K562 (cell line): ENCODE measurements at regions of chr3 and their contacts with region 1.

Region 1: GRCh38 chr3:120095226-120095978 is 1.2 kb upstream of the GSK3B start:
- DNase-seq: peak; percentile 54 to 88 (median 60)
- ATAC-seq: peak; percentile 76
- H3K4me3 ChIP-seq: peak overlapping the region; percentile 92
- H3K27ac ChIP-seq: peak overlapping the region; percentile 99
- H3K4me1 ChIP-seq: peaks cover 6 to 10% of the 10 kb centered on the region in 2 experiments; a peak in 3 of 5 replicates
- H3K27me3 ChIP-seq: no peaks in the 10 kb centered on the region
- CTCF ChIP-seq: no peak
- EP300 ChIP-seq: peak; percentile 20; the same call in 1 of the 2 replicates
- POLR2A ChIP-seq: peak; percentile 97
- RAD21 ChIP-seq: no peak

Region 2: GRCh38 chr3:119279101-119279554 is 816.3 kb before region 1 on chr3:
- CTCF ChIA-PET with region 1: no interaction called
- POLR2A ChIA-PET with region 1: no interaction called
- in situ Hi-C with region 1: no loop called
- intact Hi-C with region 1: no loop called
- DNase-seq: no peak
- ATAC-seq: no peak
- H3K4me3 ChIP-seq: no peak overlapping the region
- H3K27ac ChIP-seq: no peak overlapping the region
- H3K4me1 ChIP-seq: no peaks in the 10 kb centered on the region
- H3K27me3 ChIP-seq: peaks cover 0 to 5% of the 10 kb centered on the region in 2 experiments; a peak in 3 of 5 replicates
- CTCF ChIP-seq: no peak
- EP300 ChIP-seq: no peak
- POLR2A ChIP-seq: no peak
- RAD21 ChIP-seq: no peak

Region 3: DNA sequence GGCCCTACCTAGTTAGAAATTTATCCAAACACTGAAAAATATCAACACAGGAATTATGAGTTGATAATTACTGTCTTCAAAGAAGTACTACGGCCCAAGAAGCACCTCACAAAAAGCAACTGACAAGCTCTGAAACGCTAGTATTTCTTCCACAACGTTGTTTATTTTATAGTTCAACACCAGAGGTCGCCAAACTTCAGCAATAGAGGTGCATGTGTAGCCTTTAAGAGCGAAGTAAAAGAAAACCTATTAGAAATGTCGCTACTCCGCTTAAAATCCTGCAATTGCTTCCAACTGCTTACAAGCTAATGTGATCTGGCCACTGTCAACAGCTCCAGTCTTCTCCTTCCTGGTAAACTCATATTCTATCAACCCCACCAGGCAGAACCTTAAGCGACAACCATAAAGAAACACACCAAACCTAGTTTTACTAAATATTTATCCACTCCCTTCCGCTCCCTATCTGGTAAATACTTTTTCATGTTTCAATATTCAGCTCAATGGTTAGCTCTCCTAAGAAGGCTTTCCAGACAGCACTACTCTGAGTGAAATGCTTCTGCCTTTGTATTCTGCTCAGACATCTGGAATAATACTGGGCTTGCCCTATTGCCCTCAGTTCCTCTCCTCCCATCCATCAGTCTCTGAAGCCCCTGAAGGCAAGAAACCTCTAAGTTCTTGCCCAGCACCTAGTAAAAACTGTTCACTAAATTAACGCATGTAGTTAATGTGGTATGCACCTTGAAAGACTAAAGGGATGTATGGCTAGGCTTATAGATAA is 203.3 kb before region 1 on chr3:
- CTCF ChIA-PET with region 1: no interaction called
- POLR2A ChIA-PET with region 1: interaction called, 3 read pairs
- in situ Hi-C with region 1: no loop called
- intact Hi-C with region 1: loop called (anchors 5 kb)
- DNase-seq: peak; percentile 6 to 62 (median 11)
- ATAC-seq: peak; percentile 76
- H3K4me3 ChIP-seq: no peak overlapping the region
- H3K27ac ChIP-seq: no peak overlapping the region
- H3K4me1 ChIP-seq: no peaks in the 10 kb centered on the region
- H3K27me3 ChIP-seq: no peaks in the 10 kb centered on the region
- CTCF ChIP-seq: peak; percentile 38 to 66 (median 57); a peak in 5 of 6 replicates
- EP300 ChIP-seq: no peak
- POLR2A ChIP-seq: no peak
- RAD21 ChIP-seq: peak; percentile 54 to 80

Region 4: GRCh38 chr3:119937229-119937628 is 158.2 kb before region 1 on chr3:
- CTCF ChIA-PET with region 1: no interaction called
- POLR2A ChIA-PET with region 1: no interaction called
- in situ Hi-C with region 1: no loop called
- intact Hi-C with region 1: loop called (anchors 10 kb)
- DNase-seq: peak in 2 of 4 experiments; percentile 9 to 29
- ATAC-seq: peak; percentile 83
- H3K4me3 ChIP-seq: no peak overlapping the region
- H3K27ac ChIP-seq: no peak overlapping the region; the same call in 2 of the 3 replicates
- H3K4me1 ChIP-seq: peaks cover 0 to 3% of the 10 kb centered on the region in 2 experiments; a peak in 2 of 5 replicates
- H3K27me3 ChIP-seq: no peaks in the 10 kb centered on the region
- CTCF ChIP-seq: no peak
- EP300 ChIP-seq: no peak
- POLR2A ChIP-seq: no peak
- RAD21 ChIP-seq: no peak

Region 5: GRCh38 chr3:120017692-120018091 is 77.7 kb before region 1 on chr3:
- CTCF ChIA-PET with region 1: no interaction called
- POLR2A ChIA-PET with region 1: interaction called, 7 read pairs
- in situ Hi-C with region 1: no loop called
- intact Hi-C with region 1: loop called (anchors 5 kb)
- DNase-seq: no peak
- ATAC-seq: no peak
- H3K4me3 ChIP-seq: no peak overlapping the region
- H3K27ac ChIP-seq: no peak overlapping the region
- H3K4me1 ChIP-seq: peaks cover 0 to 3% of the 10 kb centered on the region in 2 experiments; a peak in 2 of 5 replicates
- H3K27me3 ChIP-seq: no peaks in the 10 kb centered on the region
- CTCF ChIP-seq: no peak
- EP300 ChIP-seq: no peak
- POLR2A ChIP-seq: no peak
- RAD21 ChIP-seq: no peak

Region 6: GRCh38 chr3:120081719-120082118 is 13.7 kb before region 1 on chr3:
- CTCF ChIA-PET with region 1: no interaction called
- POLR2A ChIA-PET with region 1: interaction called, 28 read pairs
- in situ Hi-C with region 1: no loop called
- intact Hi-C with region 1: no loop called
- DNase-seq: no peak
- ATAC-seq: no peak
- H3K4me3 ChIP-seq: no peak overlapping the region
- H3K27ac ChIP-seq: no peak overlapping the region
- H3K4me1 ChIP-seq: no peaks in the 10 kb centered on the region; a peak in 1 of 5 replicates
- H3K27me3 ChIP-seq: no peaks in the 10 kb centered on the region
- CTCF ChIP-seq: no peak
- EP300 ChIP-seq: no peak
- POLR2A ChIP-seq: no peak
- RAD21 ChIP-seq: no peak

Region 7: GRCh38 chr3:120348981-120349818 is 253.8 kb after region 1 on chr3 and contains the start of gene LRRC58:
- CTCF ChIA-PET with region 1: no interaction called
- POLR2A ChIA-PET with region 1: interaction called, 4 read pairs
- in situ Hi-C with region 1: no loop called
- intact Hi-C with region 1: loop called (anchors 5 kb)
- DNase-seq: peak; percentile 80 to 91 (median 83)
- ATAC-seq: peak; percentile 95
- H3K4me3 ChIP-seq: peak within 1 kb of the TSS; percentile 59
- H3K27ac ChIP-seq: peak within 1 kb of the TSS; percentile 88
- H3K4me1 ChIP-seq: peaks cover 6 to 20% of the 10 kb centered on the region in 2 experiments; a peak in 4 of 5 replicates
- H3K27me3 ChIP-seq: no peaks in the 10 kb centered on the region
- CTCF ChIP-seq: peak in 1 of 3 experiments; percentile 30; a peak in 1 of 6 replicates
- EP300 ChIP-seq: no peak
- POLR2A ChIP-seq: peak; percentile 81
- RAD21 ChIP-seq: no peak
- polyA plus RNA-seq, gene LRRC58: 5.6 to 6.2 TPM